ENCODE measurements at regions of chr17 and their contacts with region 1.

Region 1: DNA sequence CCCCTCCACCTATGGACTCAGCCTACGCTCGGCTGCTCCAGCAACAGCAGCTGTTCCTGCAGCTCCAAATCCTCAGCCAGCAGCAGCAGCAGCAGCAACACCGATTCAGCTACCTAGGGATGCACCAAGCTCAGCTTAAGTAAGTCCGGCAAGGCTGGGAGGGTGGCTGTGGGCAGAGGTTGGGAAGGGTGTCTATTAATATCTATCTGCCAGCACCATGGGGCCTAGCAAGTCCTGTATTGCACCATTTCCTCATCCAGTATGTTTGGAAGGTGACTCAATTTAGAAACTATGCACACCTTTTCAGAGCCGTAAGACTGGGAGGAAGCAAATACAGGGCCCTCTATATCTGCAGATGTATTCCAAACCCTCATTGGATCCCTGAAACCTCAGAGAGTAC is 45.0 kb upstream of the ARHGAP44 start:
- DNase-seq: no peak
- H3K4me3 ChIP-seq: no peak overlapping the region
- H3K27ac ChIP-seq: peak overlapping the region; percentile 46 to 49
- H3K4me1 ChIP-seq: peaks cover 0 to 11% of the 10 kb centered on the region in 2 donors
- H3K27me3 ChIP-seq: no peaks in the 10 kb centered on the region
- CTCF ChIP-seq: no peak

Region 2: DNA sequence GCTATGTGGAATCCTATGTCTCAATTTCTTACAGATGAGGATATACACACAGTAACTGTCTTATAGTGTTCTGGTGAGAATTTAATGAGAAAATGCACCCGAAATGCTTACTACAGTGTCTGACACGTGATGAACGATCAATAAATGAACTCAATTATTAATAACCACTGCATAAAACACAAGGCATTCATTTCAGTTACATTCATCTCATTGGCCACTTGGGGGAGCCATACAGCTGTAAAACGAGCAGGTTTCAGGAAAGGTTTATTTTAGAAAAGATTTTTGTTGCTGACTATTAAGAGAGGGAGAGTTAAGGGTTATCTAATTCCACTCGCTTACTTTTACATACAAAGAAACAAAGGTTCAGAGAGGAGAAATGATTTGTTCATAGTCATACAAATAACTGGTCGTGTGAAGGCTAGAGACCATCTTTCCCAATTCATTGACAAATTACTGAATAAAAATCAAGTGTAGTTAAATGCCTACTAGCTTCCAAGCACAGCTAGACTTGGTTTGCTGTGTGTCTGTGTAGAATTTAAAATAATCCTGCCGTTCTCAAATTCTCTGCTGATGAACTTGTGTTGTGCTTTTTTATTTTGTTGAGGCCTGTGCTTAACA is 563.5 kb before region 1 on chr17:
- intact Hi-C with region 1: loop called (anchors 2 kb)
- DNase-seq: no peak
- H3K4me3 ChIP-seq: peak overlapping the region in 1 of 2 donors; percentile 28
- H3K27ac ChIP-seq: peak overlapping the region in 1 of 2 donors; percentile 58
- H3K4me1 ChIP-seq: peaks cover 0 to 5% of the 10 kb centered on the region in 2 donors
- H3K27me3 ChIP-seq: no peaks in the 10 kb centered on the region
- CTCF ChIP-seq: peak; percentile 58 to 79 (median 76)

Region 3: GRCh38 chr17:12545877-12546513 is 198.3 kb before region 1 on chr17:
- intact Hi-C with region 1: loop called (anchors 2 kb)
- DNase-seq: no peak
- H3K4me3 ChIP-seq: no peak overlapping the region
- H3K27ac ChIP-seq: no peak overlapping the region
- H3K4me1 ChIP-seq: peaks cover 0 to 5% of the 10 kb centered on the region in 2 donors
- H3K27me3 ChIP-seq: no peaks in the 10 kb centered on the region
- CTCF ChIP-seq: peak; percentile 59 to 84 (median 78)

Region 4: DNA sequence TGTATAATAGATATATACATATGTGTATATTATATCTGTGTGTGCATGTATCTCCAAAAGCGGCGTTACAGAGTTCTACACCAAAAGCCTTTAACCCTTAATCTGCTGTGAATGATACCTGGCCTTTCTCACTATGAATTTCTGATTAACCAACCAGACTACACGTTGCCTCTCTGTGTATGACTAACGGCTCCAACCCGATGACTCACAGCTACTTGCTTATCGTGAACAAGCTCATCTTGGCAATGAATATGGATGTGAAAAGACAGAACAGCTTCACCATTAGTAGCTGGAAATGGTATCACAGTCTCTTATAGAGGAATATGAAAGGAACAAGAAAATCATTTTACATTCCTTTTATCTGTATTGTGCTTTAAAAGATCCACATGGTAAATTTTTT is 21.2 kb after region 1 on chr17:
- intact Hi-C with region 1: no loop called
- DNase-seq: peak in 1 of 2 donors; percentile 76
- H3K4me3 ChIP-seq: no peak overlapping the region
- H3K27ac ChIP-seq: no peak overlapping the region
- H3K4me1 ChIP-seq: no peaks in the 10 kb centered on the region
- H3K27me3 ChIP-seq: no peaks in the 10 kb centered on the region
- CTCF ChIP-seq: no peak

Region 5: DNA sequence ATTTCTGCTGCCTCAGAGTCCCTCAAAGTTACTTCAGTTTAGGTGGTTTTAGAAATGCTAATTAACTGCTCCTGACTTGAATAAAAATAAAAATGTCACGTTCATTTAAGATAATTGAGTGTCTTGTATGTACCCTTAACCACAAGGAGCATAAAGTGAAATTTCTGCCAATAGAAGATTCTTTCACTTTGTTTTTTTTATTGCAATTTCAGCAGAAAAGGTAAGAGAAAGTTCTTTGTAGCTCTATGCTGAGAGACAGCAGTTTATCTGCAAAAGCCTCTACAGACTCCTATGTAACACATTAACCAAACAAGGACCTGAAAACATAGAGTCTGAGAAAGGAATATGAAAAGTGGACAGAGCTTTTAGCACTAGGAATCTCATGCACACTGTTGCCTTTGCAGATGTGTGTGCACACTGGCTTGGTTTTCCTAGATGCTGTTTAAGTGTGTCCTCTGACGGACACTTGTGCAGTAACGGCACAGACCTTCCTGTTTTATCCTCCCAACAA is 56.6 kb after region 1 on chr17:
- intact Hi-C with region 1: loop called (anchors 10 kb)
- DNase-seq: no peak
- H3K4me3 ChIP-seq: no peak overlapping the region
- H3K27ac ChIP-seq: no peak overlapping the region
- H3K4me1 ChIP-seq: no peaks in the 10 kb centered on the region
- H3K27me3 ChIP-seq: no peaks in the 10 kb centered on the region
- CTCF ChIP-seq: no peak

Measured in ascending aorta (tissue), 2 donors.